ENCODE measurements at regions of chr11 and their contacts with region 1.

Region 1: DNA sequence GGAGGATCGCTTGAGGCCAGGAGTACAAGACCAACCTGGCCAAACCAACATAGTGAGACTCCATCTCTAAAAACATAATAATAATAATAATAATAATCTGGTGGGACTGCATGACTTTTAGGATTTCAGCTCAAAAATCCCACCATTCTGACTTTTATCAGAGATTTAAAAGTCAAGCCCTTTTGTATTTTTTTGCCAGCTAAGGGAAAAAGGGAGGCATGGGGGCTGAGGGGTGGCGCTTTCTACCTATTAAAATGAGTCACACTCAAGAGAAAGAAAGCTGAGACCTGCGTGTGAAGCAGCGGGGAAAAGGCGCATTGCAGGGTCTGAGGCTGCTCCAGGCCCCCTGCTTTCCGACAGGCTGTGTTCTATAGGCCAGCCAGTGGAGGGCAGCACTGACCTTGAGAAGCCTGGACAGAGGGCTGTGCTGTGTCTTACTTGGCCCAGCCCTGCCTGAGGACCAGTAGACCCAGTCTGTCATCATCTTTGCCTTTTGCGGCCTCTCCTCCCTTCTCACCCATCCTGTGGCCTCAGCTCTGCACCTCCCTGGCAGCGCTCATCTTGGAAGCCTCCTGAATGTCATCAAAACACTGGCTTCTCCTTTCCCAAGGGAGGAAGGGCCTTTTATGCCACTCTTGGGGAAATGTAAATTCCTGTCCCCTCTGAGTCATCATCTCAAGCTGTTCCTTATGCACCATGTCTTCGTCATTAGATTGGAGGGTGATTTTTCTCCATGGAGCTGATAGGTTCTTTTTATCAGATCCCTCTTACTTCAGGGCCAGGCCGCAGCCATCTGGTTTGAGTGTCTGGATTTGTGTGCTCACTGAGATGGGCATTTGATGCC is 12.7 kb upstream of the MAPK8IP1 start:
- DNase-seq: peak; percentile 100
- H3K4me3 ChIP-seq: no peak overlapping the region
- H3K27ac ChIP-seq: peak overlapping the region; percentile 61
- H3K4me1 ChIP-seq: peaks cover 21% of the 10 kb centered on the region
- H3K27me3 ChIP-seq: no peaks in the 10 kb centered on the region
- CTCF ChIP-seq: peak; percentile 100

Region 2: GRCh38 chr11:45133871-45134270 is 738.9 kb before region 1 on chr11:
- CTCF ChIA-PET with region 1: interaction called, 11 read pairs
- POLR2A ChIA-PET with region 1: no interaction called
- intact Hi-C with region 1: no loop called
- DNase-seq: no peak
- H3K4me3 ChIP-seq: no peak overlapping the region
- H3K27ac ChIP-seq: no peak overlapping the region
- H3K4me1 ChIP-seq: no peaks in the 10 kb centered on the region
- H3K27me3 ChIP-seq: peaks cover 32% of the 10 kb centered on the region
- CTCF ChIP-seq: no peak

Region 3: GRCh38 chr11:45859661-45860140 is 13.0 kb before region 1 on chr11:
- CTCF ChIA-PET with region 1: interaction called, 27 read pairs
- POLR2A ChIA-PET with region 1: interaction called, 4 read pairs
- intact Hi-C with region 1: no loop called
- DNase-seq: peak; percentile 97
- H3K4me3 ChIP-seq: no peak overlapping the region
- H3K27ac ChIP-seq: peak overlapping the region; percentile 70
- H3K4me1 ChIP-seq: peaks cover 37% of the 10 kb centered on the region
- H3K27me3 ChIP-seq: no peaks in the 10 kb centered on the region
- CTCF ChIP-seq: no peak

Region 4: GRCh38 chr11:45964911-45965389 is 92.2 kb after region 1 on chr11:
- CTCF ChIA-PET with region 1: interaction called, 8 read pairs
- POLR2A ChIA-PET with region 1: no interaction called
- intact Hi-C with region 1: loop called (anchors 1 kb)
- DNase-seq: peak; percentile 97
- H3K4me3 ChIP-seq: no peak overlapping the region
- H3K27ac ChIP-seq: no peak overlapping the region
- H3K4me1 ChIP-seq: no peaks in the 10 kb centered on the region
- H3K27me3 ChIP-seq: no peaks in the 10 kb centered on the region
- CTCF ChIP-seq: peak; percentile 100

Region 5: DNA sequence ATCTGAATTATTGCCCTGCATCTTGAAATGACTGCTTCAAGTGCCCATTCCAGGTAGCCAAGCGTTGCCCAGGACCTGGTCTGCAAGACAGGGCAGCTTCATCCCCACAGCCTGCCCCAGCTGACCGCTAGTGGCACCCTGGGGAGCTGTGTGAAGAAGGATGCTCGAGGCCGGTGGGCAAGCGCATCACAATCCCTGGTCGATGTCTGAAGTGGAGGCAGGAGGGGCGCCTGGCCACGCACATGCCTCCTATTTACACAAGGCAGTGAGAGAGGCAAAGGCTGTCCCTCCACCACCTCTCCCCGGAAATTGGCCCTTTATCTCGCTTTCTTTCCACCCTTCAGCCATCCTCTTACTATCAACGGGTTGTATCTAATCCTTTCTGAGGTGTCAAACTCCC is 276.6 kb after region 1 on chr11:
- CTCF ChIA-PET with region 1: no interaction called
- POLR2A ChIA-PET with region 1: no interaction called
- intact Hi-C with region 1: no loop called
- DNase-seq: no peak
- H3K4me3 ChIP-seq: no peak overlapping the region
- H3K27ac ChIP-seq: no peak overlapping the region
- H3K4me1 ChIP-seq: no peaks in the 10 kb centered on the region
- H3K27me3 ChIP-seq: peaks cover 19% of the 10 kb centered on the region
- CTCF ChIP-seq: no peak

Region 6: DNA sequence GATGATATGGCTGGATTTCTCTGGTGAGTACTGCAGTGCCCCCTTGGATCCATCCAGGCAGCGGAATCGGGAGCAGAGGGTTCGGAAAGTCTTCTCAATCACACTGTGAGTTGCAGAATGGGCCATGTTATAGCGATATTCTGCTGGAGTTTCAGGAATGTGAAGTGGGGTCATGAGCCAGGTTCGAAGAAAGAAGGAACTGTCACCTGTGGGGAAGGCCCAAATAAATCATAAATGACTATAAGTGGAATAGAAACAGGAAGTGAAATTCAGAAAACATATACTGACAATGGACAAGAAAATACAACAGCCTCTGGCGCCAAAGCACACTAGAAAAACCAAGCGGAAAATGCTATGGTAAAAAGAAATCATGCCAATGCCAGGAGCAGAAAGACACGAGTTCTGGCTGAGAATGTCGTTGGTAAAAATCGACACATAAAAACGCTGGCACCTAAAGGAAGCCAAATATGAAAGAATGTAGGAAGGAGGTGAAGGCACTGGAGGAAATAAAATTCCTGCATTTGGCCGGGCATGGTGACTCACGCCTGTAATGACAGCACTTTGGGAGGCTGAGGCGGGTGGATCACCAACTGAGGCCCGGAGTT is 731.1 kb after region 1 on chr11:
- CTCF ChIA-PET with region 1: interaction called, 14 read pairs
- POLR2A ChIA-PET with region 1: no interaction called
- intact Hi-C with region 1: no loop called
- DNase-seq: no peak
- H3K4me3 ChIP-seq: no peak overlapping the region
- H3K27ac ChIP-seq: no peak overlapping the region
- H3K4me1 ChIP-seq: peaks cover 11% of the 10 kb centered on the region
- H3K27me3 ChIP-seq: no peaks in the 10 kb centered on the region
- CTCF ChIP-seq: no peak

Measured in A673 (cell line).